Right ventricle myocardium inferior (tissue), 1 donor: ENCODE measurements at regions of chr3 and their contacts with region 1.

Region 1: GRCh38 chr3:77348231-77348855 is 308.4 kb downstream of the ROBO2 start:
- DNase-seq: no peak
- ATAC-seq: no peak

Region 2: DNA sequence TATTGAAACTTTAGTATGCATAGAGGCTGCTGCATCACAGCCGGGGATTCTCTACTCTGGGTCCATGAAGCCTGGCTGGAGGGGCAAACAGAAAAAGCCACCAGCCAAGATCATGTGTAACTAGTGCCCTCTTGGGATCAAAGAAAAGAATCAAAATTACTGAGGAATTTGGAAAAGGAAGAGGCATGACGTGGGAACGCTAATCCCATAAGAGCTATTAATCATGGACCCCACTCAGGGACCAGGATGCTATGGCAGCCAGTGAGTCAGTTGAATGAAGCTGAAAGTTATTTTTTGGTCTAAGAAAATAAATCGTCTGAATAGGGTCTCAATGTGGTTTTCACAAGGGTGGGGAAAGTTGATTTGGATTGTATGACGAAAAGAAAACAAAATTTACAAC is 856.6 kb after region 1 on chr3:
- intact Hi-C with region 1: loop called (anchors 10 kb)
- DNase-seq: no peak
- ATAC-seq: no peak